ENCODE measurements at regions of chr3 and their contacts with region 1.

Region 1: DNA sequence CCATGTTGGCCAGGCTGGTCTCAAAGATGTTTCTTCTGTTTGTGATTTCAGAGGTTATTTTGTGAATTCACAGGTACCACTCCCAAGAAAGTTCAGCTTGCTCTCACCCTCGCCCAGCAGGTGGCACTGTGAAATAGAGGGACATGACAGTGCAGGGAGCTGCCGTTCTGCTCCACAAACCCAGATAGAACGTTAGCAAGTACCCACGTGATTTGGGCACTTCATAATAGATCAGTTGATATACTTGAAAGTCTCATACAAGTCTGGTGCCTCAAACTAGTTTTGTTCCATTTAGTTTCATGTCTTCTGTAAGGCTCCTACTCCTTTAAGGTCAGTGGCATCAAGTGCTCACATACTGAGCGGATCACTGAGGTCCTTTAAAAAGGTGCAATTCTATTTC is 45.5 kb downstream of the FILIP1L start:
- DNase-seq: peak; percentile 79
- ATAC-seq: peak; percentile 30; the same call in 1 of the 2 replicates
- H3K4me3 ChIP-seq: no peak overlapping the region
- H3K27ac ChIP-seq: no peak overlapping the region
- H3K4me1 ChIP-seq: peaks cover 19% of the 10 kb centered on the region
- H3K27me3 ChIP-seq: no peaks in the 10 kb centered on the region
- CTCF ChIP-seq: peak; percentile 77
- POLR2A ChIP-seq: no peak
- RAD21 ChIP-seq: peak; percentile 82

Region 2: DNA sequence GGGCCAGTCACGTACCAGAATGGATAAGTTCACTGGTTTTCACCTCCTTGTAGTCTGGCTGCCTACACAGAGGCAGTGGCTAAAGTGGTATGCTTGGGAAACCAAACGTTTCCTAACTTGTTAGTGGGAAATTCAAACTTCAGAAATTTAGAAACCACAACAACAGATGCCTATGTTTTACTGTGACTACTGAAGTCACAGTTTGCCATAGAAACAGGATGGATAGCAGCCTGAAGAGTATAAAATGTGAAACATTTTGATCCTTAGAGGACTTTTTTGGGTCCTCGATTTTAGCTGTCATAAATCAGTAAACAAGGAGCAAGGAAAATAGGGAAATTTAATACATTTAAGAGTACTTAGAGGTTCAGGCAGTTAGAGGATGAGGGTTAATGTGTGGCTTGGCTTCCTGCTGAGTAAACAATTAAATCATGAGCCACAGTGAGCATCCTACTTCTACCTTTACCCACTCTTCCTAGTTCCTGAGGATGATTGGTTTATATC is 202.5 kb before region 1 on chr3:
- CTCF ChIA-PET with region 1: no interaction called
- POLR2A ChIA-PET with region 1: no interaction called
- dilution Hi-C with region 1: no loop called
- in situ Hi-C with region 1: loop called (anchors 25 kb)
- intact Hi-C with region 1: loop called (anchors 5 kb)
- DNase-seq: peak; percentile 69
- ATAC-seq: peak; percentile 22; the same call in 1 of the 2 replicates
- H3K4me3 ChIP-seq: no peak overlapping the region
- H3K27ac ChIP-seq: peak overlapping the region; percentile 16; the same call in 1 of the 2 replicates
- H3K4me1 ChIP-seq: peaks cover 28% of the 10 kb centered on the region
- H3K27me3 ChIP-seq: no peaks in the 10 kb centered on the region
- CTCF ChIP-seq: no peak
- POLR2A ChIP-seq: no peak
- RAD21 ChIP-seq: no peak

Region 3: GRCh38 chr3:99970198-99970597 is 98.6 kb before region 1 on chr3:
- CTCF ChIA-PET with region 1: no interaction called
- POLR2A ChIA-PET with region 1: no interaction called
- dilution Hi-C with region 1: no loop called
- in situ Hi-C with region 1: loop called (anchors 25 kb)
- intact Hi-C with region 1: no loop called
- DNase-seq: no peak
- ATAC-seq: no peak
- H3K4me3 ChIP-seq: no peak overlapping the region
- H3K27ac ChIP-seq: no peak overlapping the region
- H3K4me1 ChIP-seq: peaks cover 12% of the 10 kb centered on the region
- H3K27me3 ChIP-seq: no peaks in the 10 kb centered on the region
- CTCF ChIP-seq: no peak
- POLR2A ChIP-seq: no peak
- RAD21 ChIP-seq: no peak

Region 4: GRCh38 chr3:100100425-100100824 is 31.6 kb after region 1 on chr3:
- CTCF ChIA-PET with region 1: no interaction called
- POLR2A ChIA-PET with region 1: interaction called, 12 read pairs
- dilution Hi-C with region 1: no loop called
- in situ Hi-C with region 1: no loop called
- intact Hi-C with region 1: no loop called
- DNase-seq: peak; percentile 68
- ATAC-seq: peak; percentile 33
- H3K4me3 ChIP-seq: no peak overlapping the region
- H3K27ac ChIP-seq: no peak overlapping the region
- H3K4me1 ChIP-seq: peaks cover 21% of the 10 kb centered on the region
- H3K27me3 ChIP-seq: no peaks in the 10 kb centered on the region
- CTCF ChIP-seq: no peak
- POLR2A ChIP-seq: no peak
- RAD21 ChIP-seq: no peak

Measured in IMR-90 (cell line).